HCT116 (cell line): ENCODE measurements at regions of chr22 and their contacts with region 1.

Region 1: DNA sequence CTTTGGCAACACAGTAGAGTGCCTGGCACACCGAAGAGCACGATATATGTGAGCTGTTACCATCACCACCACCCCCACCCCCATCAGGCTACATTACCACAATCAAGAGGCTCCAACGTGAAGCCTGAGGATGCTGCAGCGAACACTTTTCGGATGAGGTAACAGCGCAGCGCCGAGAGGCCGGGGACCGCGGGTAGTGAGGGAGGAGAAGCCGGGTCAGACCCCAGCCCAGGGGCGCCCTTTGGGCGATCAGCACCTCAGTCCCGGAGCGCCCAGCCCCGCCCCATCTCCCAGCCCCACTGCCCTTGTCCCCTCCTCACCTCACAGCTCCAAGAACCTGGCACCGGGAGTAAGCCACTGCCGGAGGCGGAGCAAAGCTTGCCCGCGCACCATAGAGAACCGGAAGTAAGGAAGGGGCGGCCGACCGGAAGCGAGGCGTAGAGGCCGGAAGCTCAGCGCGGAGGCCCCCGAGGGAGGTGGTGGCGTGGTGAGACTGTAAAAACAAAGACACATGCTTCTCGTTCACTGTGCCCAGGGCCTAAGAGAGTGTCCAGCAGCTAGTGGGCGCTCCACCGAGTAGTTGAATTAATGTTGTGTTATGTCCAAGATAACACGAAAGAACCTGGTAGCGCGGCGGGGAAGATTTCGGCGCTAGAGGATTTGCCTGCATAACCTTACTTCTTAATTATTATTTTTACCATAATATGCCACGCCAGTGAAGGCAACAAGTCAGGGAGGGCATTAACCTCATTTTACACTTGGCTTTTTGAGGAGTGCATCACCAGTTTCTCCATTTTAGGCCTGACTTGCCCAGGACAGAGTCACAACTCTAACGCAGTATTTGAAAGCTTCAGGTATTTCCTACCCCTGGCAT is at the start of gene THOC5:
- DNase-seq: peak; percentile 89
- ATAC-seq: peak; percentile 97
- H3K4me3 ChIP-seq: peak within 1 kb of the TSS; percentile 89 to 99
- H3K27ac ChIP-seq: peak within 1 kb of the TSS; percentile 71
- H3K4me1 ChIP-seq: peaks cover 10% of the 10 kb centered on the region in 2 experiments; a peak in 3 of 4 replicates
- H3K27me3 ChIP-seq: no peaks in the 10 kb centered on the region
- CTCF ChIP-seq: peak; percentile 34 to 68 (median 68); a peak in 5 of 6 replicates
- POLR2A ChIP-seq: no peak
- RAD21 ChIP-seq: 0 out of 2 replicates have a peak, but pooled peaks have one; percentile 10
- total RNA-seq, gene THOC5: 80.6 TPM

Region 2: DNA sequence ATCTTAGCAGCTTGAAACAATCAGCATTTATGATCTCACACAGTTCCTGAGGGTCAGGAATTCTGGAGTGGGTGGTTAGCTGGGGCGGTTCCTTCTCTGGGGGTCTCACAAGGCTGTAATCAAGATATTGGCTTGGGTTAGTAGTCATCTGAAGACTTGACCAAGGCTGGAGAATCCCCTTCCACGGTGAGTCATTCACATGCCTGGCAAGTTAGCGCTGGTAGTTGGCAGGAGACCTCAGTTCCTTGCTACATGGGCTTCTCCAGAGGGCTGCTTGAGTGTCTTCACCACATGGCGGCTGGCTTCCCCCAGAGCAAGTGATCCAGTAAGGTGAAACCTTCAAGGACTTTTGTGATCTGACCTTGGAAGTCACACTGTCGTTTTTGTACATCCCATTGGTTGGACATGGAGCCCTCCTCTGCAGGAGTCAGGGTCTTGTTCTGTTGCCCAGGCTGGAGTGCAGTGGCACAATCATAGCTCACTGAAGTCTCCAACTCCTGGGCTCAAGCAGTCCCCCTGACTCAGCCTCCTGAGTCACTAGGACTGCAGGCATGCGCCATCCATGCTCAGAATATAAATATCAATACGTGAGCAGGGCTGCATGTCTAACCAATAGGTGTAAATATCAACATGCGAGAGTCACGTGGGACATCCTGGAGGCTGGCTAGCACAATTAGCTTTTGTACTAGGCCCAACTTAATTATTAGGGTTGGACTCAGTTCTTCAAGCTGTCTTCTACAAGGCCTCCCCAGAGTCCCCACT is 34.5 kb after region 1 on chr22:
- CTCF ChIA-PET with region 1: interaction called, 10 read pairs
- POLR2A ChIA-PET with region 1: interaction called, 3 read pairs
- RAD21 ChIA-PET with region 1: no interaction called
- intact Hi-C with region 1: loop called (anchors 1 kb)
- DNase-seq: no peak
- ATAC-seq: peak; percentile 60; the same call in 1 of the 2 replicates
- H3K4me3 ChIP-seq: no peak overlapping the region
- H3K27ac ChIP-seq: no peak overlapping the region
- H3K4me1 ChIP-seq: peaks cover 4 to 25% of the 10 kb centered on the region in 2 experiments; a peak in 3 of 4 replicates
- H3K27me3 ChIP-seq: no peaks in the 10 kb centered on the region
- CTCF ChIP-seq: no peak
- POLR2A ChIP-seq: no peak
- RAD21 ChIP-seq: no peak